ENCODE measurements at regions of chr3 and their contacts with region 1.

Region 1: DNA sequence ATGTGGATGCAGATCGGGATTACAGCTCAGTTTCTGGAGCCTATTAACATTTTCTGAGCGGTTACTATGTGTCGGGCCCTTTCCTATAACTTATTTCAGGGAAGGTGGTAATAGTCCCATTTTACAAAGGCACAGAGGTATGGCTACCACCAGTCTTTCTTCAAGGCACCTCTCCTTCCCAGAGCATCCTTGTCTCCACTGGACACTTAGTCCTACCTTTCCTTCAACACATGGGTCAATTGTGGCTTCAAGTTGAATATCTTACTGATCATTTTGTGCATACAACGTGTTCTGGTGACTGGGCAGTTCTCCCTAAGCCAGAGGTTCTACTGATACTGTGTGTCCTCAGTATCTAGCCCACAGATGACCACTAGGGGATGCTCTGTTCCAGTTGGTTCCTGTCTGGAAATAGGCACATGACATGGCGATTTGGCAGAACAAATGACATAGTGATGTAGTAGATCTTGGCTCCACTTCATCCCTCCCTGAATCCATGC is 60.7 kb upstream of the CMTM8 start:
- DNase-seq: peak; percentile 36
- H3K4me3 Mint-ChIP-seq: no peak overlapping the region
- H3K27ac Mint-ChIP-seq: no peak overlapping the region
- H3K4me1 Mint-ChIP-seq: peaks cover 15% of the 10 kb centered on the region
- H3K27me3 Mint-ChIP-seq: peaks cover 14% of the 10 kb centered on the region

Region 2: GRCh38 chr3:32296256-32297204 is 118.8 kb after region 1 on chr3:
- intact Hi-C with region 1: loop called (anchors 5 kb)
- DNase-seq: peak; percentile 43
- H3K4me3 Mint-ChIP-seq: no peak overlapping the region
- H3K27ac Mint-ChIP-seq: no peak overlapping the region
- H3K4me1 Mint-ChIP-seq: peaks cover 32% of the 10 kb centered on the region
- H3K27me3 Mint-ChIP-seq: peaks cover 3% of the 10 kb centered on the region

Region 3: GRCh38 chr3:32340039-32340438 is 162.3 kb after region 1 on chr3:
- intact Hi-C with region 1: loop called (anchors 1 kb)
- DNase-seq: no peak
- H3K4me3 Mint-ChIP-seq: no peak overlapping the region
- H3K27ac Mint-ChIP-seq: no peak overlapping the region
- H3K4me1 Mint-ChIP-seq: peaks cover 14% of the 10 kb centered on the region
- H3K27me3 Mint-ChIP-seq: no peaks in the 10 kb centered on the region

Region 4: GRCh38 chr3:32467333-32468070 is 289.8 kb after region 1 on chr3:
- intact Hi-C with region 1: loop called (anchors 5 kb)
- DNase-seq: peak; percentile 59
- H3K4me3 Mint-ChIP-seq: no peak overlapping the region
- H3K27ac Mint-ChIP-seq: no peak overlapping the region
- H3K4me1 Mint-ChIP-seq: peaks cover 29% of the 10 kb centered on the region
- H3K27me3 Mint-ChIP-seq: no peaks in the 10 kb centered on the region

Region 5: GRCh38 chr3:32684800-32685542 is 507.2 kb after region 1 on chr3 and contains the start of gene CNOT10:
- intact Hi-C with region 1: no loop called
- DNase-seq: peak; percentile 97
- H3K4me3 Mint-ChIP-seq: peak within 1 kb of the TSS; percentile 87
- H3K27ac Mint-ChIP-seq: peak within 1 kb of the TSS; percentile 90
- H3K4me1 Mint-ChIP-seq: peaks cover 27% of the 10 kb centered on the region
- H3K27me3 Mint-ChIP-seq: peaks cover 3% of the 10 kb centered on the region
- total RNA-seq, gene CNOT10: 51.5 and 53.5 TPM in 2 replicates